Activated B cell treated with CpG ODN at 0.5 μM for 24 hours (primary cell): ENCODE measurements at regions of chr20 and their contacts with region 1.

Region 1: DNA sequence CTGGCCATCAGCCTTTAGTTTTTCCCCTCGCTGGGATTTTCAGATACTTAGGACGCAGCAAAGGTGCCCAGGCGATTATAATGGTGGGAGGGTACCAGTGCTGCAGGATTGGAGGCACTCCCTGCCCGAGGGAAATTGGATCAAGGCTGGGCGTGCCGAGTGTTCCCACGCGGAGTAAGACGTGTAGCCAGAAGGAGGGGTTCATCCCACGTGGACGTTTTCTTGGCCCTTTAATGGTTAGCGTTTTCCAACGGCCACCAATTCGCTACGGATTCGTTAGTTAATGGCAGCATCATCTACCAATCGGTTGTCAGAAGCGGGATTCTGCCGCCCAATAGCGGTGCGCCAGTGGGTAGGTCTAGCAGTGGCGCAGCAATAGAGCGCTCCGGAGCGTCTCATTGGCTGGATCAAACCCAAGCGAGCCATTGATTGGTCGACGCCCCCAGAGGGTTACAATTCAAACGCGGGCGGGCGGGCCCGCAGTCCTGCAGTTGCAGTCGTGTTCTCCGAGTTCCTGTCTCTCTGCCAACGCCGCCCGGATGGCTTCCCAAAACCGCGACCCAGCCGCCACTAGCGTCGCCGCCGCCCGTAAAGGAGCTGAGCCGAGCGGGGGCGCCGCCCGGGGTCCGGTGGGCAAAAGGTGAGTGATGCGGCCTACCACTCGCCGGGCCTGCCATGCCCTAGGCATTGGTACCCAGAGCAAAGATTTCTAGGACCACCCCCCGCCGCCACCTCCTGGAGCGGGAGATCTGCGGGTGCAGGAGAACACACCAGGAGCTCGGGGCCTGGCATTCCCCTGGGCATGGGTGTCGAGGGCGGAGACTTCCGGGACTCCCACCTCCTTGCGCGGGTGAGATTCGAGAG is at the start of gene UBE2C:
- DNase-seq: peak; percentile 79
- ATAC-seq: peak; percentile 100
- H3K4me3 Mint-ChIP-seq: peak within 1 kb of the TSS; percentile 84
- H3K27ac Mint-ChIP-seq: peak within 1 kb of the TSS; percentile 59
- H3K4me1 Mint-ChIP-seq: peaks cover 17% of the 10 kb centered on the region
- H3K27me3 Mint-ChIP-seq: no peaks in the 10 kb centered on the region
- CTCF ChIP-seq: no peak
- total RNA-seq, gene UBE2C: 2.4 and 3.3 TPM in 2 replicates

Region 2: GRCh38 chr20:45792332-45792686 is 20.1 kb before region 1 on chr20:
- CTCF ChIA-PET with region 1: no interaction called
- POLR2A ChIA-PET with region 1: no interaction called
- intact Hi-C with region 1: loop called (anchors 2 kb)
- DNase-seq: no peak
- ATAC-seq: peak; percentile 28
- H3K4me3 Mint-ChIP-seq: peak overlapping the region; percentile 92
- H3K27ac Mint-ChIP-seq: peak overlapping the region; percentile 82
- H3K4me1 Mint-ChIP-seq: peaks cover 16% of the 10 kb centered on the region
- H3K27me3 Mint-ChIP-seq: no peaks in the 10 kb centered on the region
- CTCF ChIP-seq: no peak

Region 3: GRCh38 chr20:45857114-45857881 is 44.9 kb after region 1 on chr20 and contains the starts of genes ACOT8 and ZSWIM3:
- CTCF ChIA-PET with region 1: no interaction called
- POLR2A ChIA-PET with region 1: no interaction called
- intact Hi-C with region 1: loop called (anchors 2 kb)
- DNase-seq: peak; percentile 67
- ATAC-seq: peak; percentile 98
- H3K4me3 Mint-ChIP-seq: peak within 1 kb of the TSS; percentile 94
- H3K27ac Mint-ChIP-seq: peak within 1 kb of the TSS; percentile 94
- H3K4me1 Mint-ChIP-seq: peaks cover 48% of the 10 kb centered on the region
- H3K27me3 Mint-ChIP-seq: no peaks in the 10 kb centered on the region
- CTCF ChIP-seq: no peak
- total RNA-seq, gene ACOT8: 24.5 and 27.3 TPM in 2 replicates
- total RNA-seq, gene ZSWIM3: 5.9 and 6.4 TPM in 2 replicates

Region 4: GRCh38 chr20:45880988-45881788 is 68.8 kb after region 1 on chr20 and contains the start of gene ZSWIM1:
- CTCF ChIA-PET with region 1: no interaction called
- POLR2A ChIA-PET with region 1: no interaction called
- intact Hi-C with region 1: loop called (anchors 1 kb)
- DNase-seq: peak; percentile 98
- ATAC-seq: peak; percentile 99
- H3K4me3 Mint-ChIP-seq: peak within 1 kb of the TSS; percentile 90
- H3K27ac Mint-ChIP-seq: peak within 1 kb of the TSS; percentile 93
- H3K4me1 Mint-ChIP-seq: peaks cover 34% of the 10 kb centered on the region
- H3K27me3 Mint-ChIP-seq: no peaks in the 10 kb centered on the region
- CTCF ChIP-seq: no peak
- total RNA-seq, gene ZSWIM1: 13.9 and 15.1 TPM in 2 replicates

Region 5: GRCh38 chr20:45910670-45911485 is 98.5 kb after region 1 on chr20:
- CTCF ChIA-PET with region 1: no interaction called
- POLR2A ChIA-PET with region 1: no interaction called
- intact Hi-C with region 1: loop called (anchors 1 kb)
- DNase-seq: peak; percentile 97
- ATAC-seq: peak; percentile 92
- H3K4me3 Mint-ChIP-seq: peak overlapping the region; percentile 90
- H3K27ac Mint-ChIP-seq: peak overlapping the region; percentile 83
- H3K4me1 Mint-ChIP-seq: peaks cover 31% of the 10 kb centered on the region
- H3K27me3 Mint-ChIP-seq: peaks cover 6% of the 10 kb centered on the region
- CTCF ChIP-seq: no peak